ENCODE measurements at regions of chr12 and their contacts with region 1.

Region 1: GRCh38 chr12:42462486-42462885 is 127.1 kb downstream of the PRICKLE1 start:
- DNase-seq: no peak
- ATAC-seq: no peak

Region 2: GRCh38 chr12:42504049-42504448 is 41.6 kb after region 1 on chr12:
- intact Hi-C with region 1: no loop called
- DNase-seq: no peak
- ATAC-seq: peak; percentile 58

Region 3: GRCh38 chr12:42992826-42993225 is 530.3 kb after region 1 on chr12:
- intact Hi-C with region 1: loop called (anchors 5 kb)
- DNase-seq: no peak
- ATAC-seq: no peak

Measured in sciatic nerve (tissue), 2 donors.